ENCODE measurements at regions of chr4 and their contacts with region 1.

Region 1: GRCh38 chr4:188370781-188371180 is 231.5 kb downstream of the TRIML1 start:
- DNase-seq: no peak
- H3K4me3 ChIP-seq: no peak overlapping the region
- H3K27ac ChIP-seq: no peak overlapping the region
- H3K27me3 ChIP-seq: no peaks in the 10 kb centered on the region
- CTCF ChIP-seq: no peak

Region 2: GRCh38 chr4:187887906-187888305 is 482.9 kb before region 1 on chr4:
- CTCF ChIA-PET with region 1: interaction called, 10 read pairs
- POLR2A ChIA-PET with region 1: no interaction called
- DNase-seq: no peak
- H3K4me3 ChIP-seq: no peak overlapping the region
- H3K27ac ChIP-seq: no peak overlapping the region
- H3K27me3 ChIP-seq: no peaks in the 10 kb centered on the region
- CTCF ChIP-seq: no peak

Region 3: GRCh38 chr4:188387179-188387791 is 16.5 kb after region 1 on chr4:
- CTCF ChIA-PET with region 1: no interaction called
- POLR2A ChIA-PET with region 1: no interaction called
- DNase-seq: no peak
- H3K4me3 ChIP-seq: no peak overlapping the region
- H3K27ac ChIP-seq: no peak overlapping the region
- H3K27me3 ChIP-seq: no peaks in the 10 kb centered on the region
- CTCF ChIP-seq: no peak